ENCODE measurements at regions of chr12 and their contacts with region 1.

Region 1: GRCh38 chr12:1093166-1093751 is 102.2 kb downstream of the ERC1 start:
- DNase-seq: no peak
- H3K4me3 ChIP-seq: no peak overlapping the region
- H3K27ac ChIP-seq: no peak overlapping the region
- H3K4me1 ChIP-seq: peaks cover 0 to 20% (median 9%) of the 10 kb centered on the region in 4 donors
- H3K27me3 ChIP-seq: no peaks in the 10 kb centered on the region
- CTCF ChIP-seq: peak; percentile 46 to 70 (median 62)
- EP300 ChIP-seq: no peak
- POLR2A ChIP-seq: no peak

Region 2: GRCh38 chr12:569803-570434 is 523.3 kb before region 1 on chr12:
- intact Hi-C with region 1: loop called (anchors 10 kb)
- DNase-seq: peak; percentile 93
- H3K4me3 ChIP-seq: peak overlapping the region; percentile 49 to 67 (median 62)
- H3K27ac ChIP-seq: peak overlapping the region; percentile 88 to 91 (median 90)
- H3K4me1 ChIP-seq: peaks cover 0 to 32% (median 24%) of the 10 kb centered on the region in 4 donors
- H3K27me3 ChIP-seq: no peaks in the 10 kb centered on the region
- CTCF ChIP-seq: peak; percentile 84 to 94 (median 90)
- EP300 ChIP-seq: no peak
- POLR2A ChIP-seq: no peak

Region 3: GRCh38 chr12:818733-819132 is 274.5 kb before region 1 on chr12:
- intact Hi-C with region 1: loop called (anchors 5 kb)
- DNase-seq: no peak
- H3K4me3 ChIP-seq: no peak overlapping the region
- H3K27ac ChIP-seq: peak overlapping the region in 3 of 4 donors; percentile 4 to 46 (median 30)
- H3K4me1 ChIP-seq: peaks cover 0 to 33% (median 14%) of the 10 kb centered on the region in 4 donors
- H3K27me3 ChIP-seq: no peaks in the 10 kb centered on the region
- CTCF ChIP-seq: peak in 1 of 4 experiments; percentile 12
- EP300 ChIP-seq: no peak
- POLR2A ChIP-seq: no peak

Region 4: DNA sequence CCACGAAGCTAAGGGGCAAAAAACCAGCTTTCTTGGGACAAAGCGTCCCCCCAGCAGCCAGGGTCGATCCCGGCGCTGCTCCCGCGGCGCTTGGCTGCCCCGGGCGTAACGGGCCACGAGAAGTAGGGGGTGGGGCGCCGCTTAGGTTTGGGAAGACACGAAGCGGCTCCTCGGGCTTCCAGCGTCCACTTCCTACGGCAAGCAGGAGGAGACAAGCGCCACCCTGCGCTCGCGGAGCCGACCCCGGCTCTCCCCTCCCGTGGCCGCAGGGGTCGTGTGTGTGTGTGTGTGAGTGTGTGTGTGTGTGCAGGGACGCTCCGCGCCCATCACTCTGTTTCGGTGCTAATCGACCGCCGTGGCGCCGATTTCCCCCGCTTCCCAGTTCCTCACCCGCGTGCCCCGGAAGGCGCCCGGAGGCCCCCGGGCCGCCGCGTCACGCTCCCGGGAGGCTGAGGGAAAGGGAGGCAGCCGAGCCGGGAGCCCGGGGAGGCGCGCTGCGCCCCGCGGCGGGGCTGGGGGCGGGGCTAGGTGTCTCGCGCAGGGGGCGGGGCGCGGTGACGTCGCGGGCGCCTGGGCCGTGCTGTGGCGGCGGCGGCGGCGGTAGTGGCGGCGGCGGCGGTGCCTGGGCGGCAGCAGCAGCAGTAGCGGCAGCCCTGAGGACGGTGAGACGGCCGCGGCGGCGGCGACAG is 102.5 kb before region 1 on chr12 and contains the start of gene ERC1:
- intact Hi-C with region 1: loop called (anchors 5 kb)
- DNase-seq: peak; percentile 94
- H3K4me3 ChIP-seq: peak within 1 kb of the TSS; percentile 77 to 97 (median 86)
- H3K27ac ChIP-seq: peak within 1 kb of the TSS; percentile 98 to 99 (median 98)
- H3K4me1 ChIP-seq: peaks cover 0 to 45% (median 34%) of the 10 kb centered on the region in 4 donors
- H3K27me3 ChIP-seq: no peaks in the 10 kb centered on the region
- CTCF ChIP-seq: no peak
- EP300 ChIP-seq: peak in 1 of 4 donors; percentile 8
- POLR2A ChIP-seq: peak; percentile 50 to 59
- total RNA-seq, gene ERC1: 34.6 to 97.8 (median 42.4) TPM

Region 5: DNA sequence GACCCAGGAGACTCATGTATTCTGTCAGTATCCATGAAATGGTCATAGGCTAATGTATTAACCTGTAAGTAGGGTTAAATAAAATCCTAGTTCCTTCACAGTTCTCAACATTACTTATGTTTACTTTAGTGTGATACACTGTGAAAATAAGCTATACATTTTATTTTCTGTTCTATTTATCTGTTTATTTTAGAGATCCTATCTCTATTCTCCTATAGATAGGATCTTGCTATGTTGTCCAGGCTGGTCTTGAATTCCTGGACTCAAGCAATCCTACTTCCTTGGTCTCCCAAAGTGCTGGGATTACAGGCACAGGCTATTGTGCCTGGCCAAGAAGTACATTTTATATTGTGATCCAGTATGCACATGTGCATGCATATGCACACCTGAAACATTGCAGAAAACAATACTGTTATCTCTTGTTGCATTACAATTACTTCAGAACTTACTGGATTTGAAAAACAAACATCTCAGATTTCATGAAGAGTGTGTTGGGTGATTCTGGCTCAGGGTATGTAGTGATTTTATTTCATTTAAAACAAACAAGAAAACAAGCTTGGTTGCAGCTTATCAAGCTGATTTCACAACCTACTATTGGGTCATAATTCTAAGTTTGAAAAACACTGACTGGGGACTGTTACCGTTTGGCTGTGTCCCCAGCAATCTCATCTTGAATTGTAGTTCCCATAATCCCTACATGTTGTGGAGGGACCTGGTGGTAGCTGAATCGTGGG is 71.2 kb before region 1 on chr12:
- intact Hi-C with region 1: no loop called
- DNase-seq: no peak
- H3K4me3 ChIP-seq: no peak overlapping the region
- H3K27ac ChIP-seq: no peak overlapping the region
- H3K4me1 ChIP-seq: no peaks in the 10 kb centered on the region
- H3K27me3 ChIP-seq: no peaks in the 10 kb centered on the region
- CTCF ChIP-seq: no peak
- EP300 ChIP-seq: no peak
- POLR2A ChIP-seq: no peak

Region 6: DNA sequence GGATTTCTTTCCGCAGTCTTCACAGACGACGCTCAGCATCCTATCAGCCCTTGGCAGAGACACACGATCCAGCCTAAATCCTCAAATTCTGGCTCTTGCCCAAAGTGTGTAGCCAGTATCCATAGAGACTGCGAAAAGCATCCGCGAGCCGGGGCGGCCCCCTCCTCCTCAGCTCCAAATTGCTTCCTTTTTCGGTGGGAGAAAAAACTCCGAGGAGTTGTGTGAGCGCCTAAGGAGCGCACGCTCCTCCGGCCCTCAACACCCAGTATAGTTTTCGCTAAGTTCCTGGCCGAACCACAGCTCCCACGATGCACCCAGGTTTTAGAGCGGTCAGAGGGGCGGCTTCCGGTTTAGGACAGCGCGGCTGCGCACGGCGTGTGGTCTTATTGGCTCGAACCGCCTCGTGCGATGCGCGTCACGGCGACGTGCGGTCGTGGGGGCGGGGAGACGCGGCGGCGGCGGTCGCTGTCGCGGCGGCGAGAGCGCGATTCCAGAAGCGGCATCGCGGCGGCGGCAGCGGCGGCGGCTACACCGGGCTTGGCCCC is 597.4 kb after region 1 on chr12 and contains the start of gene ADIPOR2:
- intact Hi-C with region 1: no loop called
- DNase-seq: peak; percentile 98
- H3K4me3 ChIP-seq: peak within 1 kb of the TSS; percentile 76 to 95 (median 85)
- H3K27ac ChIP-seq: peak within 1 kb of the TSS; percentile 90 to 97 (median 93)
- H3K4me1 ChIP-seq: peaks cover 0 to 25% (median 19%) of the 10 kb centered on the region in 4 donors
- H3K27me3 ChIP-seq: no peaks in the 10 kb centered on the region
- CTCF ChIP-seq: no peak
- EP300 ChIP-seq: peak in 1 of 4 donors; percentile 80
- POLR2A ChIP-seq: peak; percentile 25 to 50
- total RNA-seq, gene ADIPOR2: 25.2 to 29.6 (median 27.9) TPM

Measured in sigmoid colon (tissue), 7 donors.